ENCODE measurements at regions of chr12 and their contacts with region 1.

Region 1: GRCh38 chr12:94922561-94922960 is 80.9 kb downstream of the NDUFA12 start:
- DNase-seq: no peak
- ATAC-seq: no peak
- H3K4me3 ChIP-seq: no peak overlapping the region
- H3K27ac ChIP-seq: no peak overlapping the region
- H3K4me1 ChIP-seq: no peaks in the 10 kb centered on the region
- H3K27me3 ChIP-seq: no peaks in the 10 kb centered on the region
- CTCF ChIP-seq: no peak

Region 2: GRCh38 chr12:94909663-94910062 is 12.9 kb before region 1 on chr12:
- intact Hi-C with region 1: loop called in 1 of 10 experiments (anchors 1 kb)
- DNase-seq: no peak
- ATAC-seq: no peak
- H3K4me3 ChIP-seq: no peak overlapping the region
- H3K27ac ChIP-seq: no peak overlapping the region
- H3K4me1 ChIP-seq: no peaks in the 10 kb centered on the region
- H3K27me3 ChIP-seq: no peaks in the 10 kb centered on the region
- CTCF ChIP-seq: no peak

Measured in heart right ventricle (tissue), 16 donors.